A549 (cell line): ENCODE measurements at regions of chr6 and their contacts with region 1.

Region 1: GRCh38 chr6:8983188-8983688 is 547.9 kb upstream of the SLC35B3 start:
- DNase-seq: peak; percentile 27 to 55
- ATAC-seq: peak; percentile 92 to 96
- H3K4me3 ChIP-seq: no peak overlapping the region
- H3K27ac ChIP-seq: no peak overlapping the region
- H3K4me1 ChIP-seq: peaks cover 7% of the 10 kb centered on the region; the same call in 1 of the 3 replicates
- CTCF ChIP-seq: peak; percentile 80
- EP300 ChIP-seq: no peak
- POLR2A ChIP-seq: no peak
- RAD21 ChIP-seq: peak; percentile 89 to 90

Region 2: DNA sequence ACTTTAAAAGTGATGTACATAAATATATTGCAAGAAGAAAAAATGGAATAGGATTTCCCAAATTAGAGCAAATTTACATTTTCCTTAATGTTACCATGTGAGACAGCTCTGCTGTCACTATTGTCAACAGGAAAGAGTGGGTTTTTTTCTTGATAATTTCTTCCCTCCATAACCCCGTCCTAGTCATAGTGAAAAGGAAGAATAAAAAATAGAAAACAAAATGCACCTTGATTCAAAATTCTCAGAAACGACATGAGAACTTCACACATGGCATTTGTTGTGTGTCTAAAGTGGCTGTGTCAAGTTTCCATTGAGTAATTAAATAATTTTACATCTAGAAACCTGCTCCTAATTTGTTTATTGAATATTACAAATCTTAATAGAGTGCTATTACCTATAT is 397.3 kb after region 1 on chr6:
- CTCF ChIA-PET with region 1: no interaction called
- POLR2A ChIA-PET with region 1: no interaction called
- DNase-seq: no peak
- ATAC-seq: no peak
- H3K4me3 ChIP-seq: no peak overlapping the region
- H3K27ac ChIP-seq: no peak overlapping the region
- H3K4me1 ChIP-seq: no peaks in the 10 kb centered on the region
- CTCF ChIP-seq: no peak
- EP300 ChIP-seq: no peak
- POLR2A ChIP-seq: no peak
- RAD21 ChIP-seq: no peak

Region 3: DNA sequence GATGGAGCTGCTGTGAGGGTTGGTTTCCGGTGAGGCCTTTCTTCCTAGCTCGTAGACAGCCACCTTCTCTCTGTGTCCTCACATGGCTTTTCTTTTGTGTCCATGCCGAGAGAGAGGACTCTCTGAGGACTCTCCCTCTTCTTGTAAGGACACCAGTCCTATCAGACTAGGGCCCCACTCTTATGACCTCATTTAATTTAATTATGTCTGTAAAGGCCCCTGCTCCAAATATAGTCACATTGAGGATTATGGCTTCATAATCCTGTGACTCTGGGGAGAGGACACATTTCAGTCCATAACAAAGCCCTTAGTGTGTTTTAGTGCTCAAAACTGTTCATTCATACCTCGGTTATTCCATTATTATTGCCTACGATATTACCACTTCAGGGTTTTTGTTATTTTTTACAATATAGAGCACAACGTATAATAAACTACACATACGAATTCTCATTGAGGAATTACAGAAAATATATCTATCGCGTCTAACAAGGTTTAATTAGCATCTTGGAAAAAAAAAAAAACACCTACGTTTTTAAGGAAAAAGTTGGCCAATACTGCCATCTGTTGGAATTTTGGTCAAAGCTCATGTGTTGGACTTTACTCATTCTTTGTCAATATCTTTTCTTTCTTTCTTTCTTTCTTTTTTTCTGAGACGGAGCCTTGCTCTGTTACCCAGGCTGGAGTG is 1451.6 kb after region 1 on chr6:
- CTCF ChIA-PET with region 1: interaction called, 15 read pairs
- POLR2A ChIA-PET with region 1: no interaction called
- DNase-seq: peak in 1 of 2 experiments; percentile 52
- ATAC-seq: peak in 1 of 2 experiments; percentile 64; a peak in 3 of 6 replicates
- H3K4me3 ChIP-seq: no peak overlapping the region
- H3K27ac ChIP-seq: peak overlapping the region; percentile 50 to 83; a peak in 5 of 6 replicates
- H3K4me1 ChIP-seq: peaks cover 18% of the 10 kb centered on the region; the same call in 2 of the 3 replicates
- CTCF ChIP-seq: peak; percentile 62
- EP300 ChIP-seq: no peak
- POLR2A ChIP-seq: no peak
- RAD21 ChIP-seq: peak; percentile 65 to 75; a peak in 4 of 5 replicates